Astrocyte of the cerebellum (primary cell): ENCODE measurements at regions of chr10 and their contacts with region 1.

Region 1: GRCh38 chr10:79079490-79080355 is 11.0 kb downstream of the ZMIZ1 start:
- DNase-seq: no peak
- H3K4me3 ChIP-seq: no peak overlapping the region
- CTCF ChIP-seq: no peak

Region 2: DNA sequence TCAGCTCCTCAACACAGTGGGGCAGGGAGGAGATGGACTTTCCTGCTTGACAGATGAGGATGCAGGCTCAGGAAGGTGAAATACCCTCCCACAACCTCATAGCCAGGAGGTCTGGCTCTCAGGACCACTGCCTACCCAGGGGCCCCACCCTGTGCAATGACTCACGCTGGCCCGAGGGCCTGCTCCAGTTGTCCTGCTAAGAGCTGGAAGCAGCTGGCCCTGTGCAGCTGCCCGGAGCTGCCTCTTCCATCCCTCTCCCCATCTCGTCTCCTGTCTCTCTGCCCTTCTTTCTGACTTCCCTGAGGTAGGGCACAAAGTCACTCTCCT is 112.9 kb after region 1 on chr10:
- in situ Hi-C with region 1: loop called (anchors 5 kb)
- DNase-seq: no peak
- H3K4me3 ChIP-seq: no peak overlapping the region
- CTCF ChIP-seq: no peak